ENCODE measurements at regions of chr19 and their contacts with region 1.

Region 1: DNA sequence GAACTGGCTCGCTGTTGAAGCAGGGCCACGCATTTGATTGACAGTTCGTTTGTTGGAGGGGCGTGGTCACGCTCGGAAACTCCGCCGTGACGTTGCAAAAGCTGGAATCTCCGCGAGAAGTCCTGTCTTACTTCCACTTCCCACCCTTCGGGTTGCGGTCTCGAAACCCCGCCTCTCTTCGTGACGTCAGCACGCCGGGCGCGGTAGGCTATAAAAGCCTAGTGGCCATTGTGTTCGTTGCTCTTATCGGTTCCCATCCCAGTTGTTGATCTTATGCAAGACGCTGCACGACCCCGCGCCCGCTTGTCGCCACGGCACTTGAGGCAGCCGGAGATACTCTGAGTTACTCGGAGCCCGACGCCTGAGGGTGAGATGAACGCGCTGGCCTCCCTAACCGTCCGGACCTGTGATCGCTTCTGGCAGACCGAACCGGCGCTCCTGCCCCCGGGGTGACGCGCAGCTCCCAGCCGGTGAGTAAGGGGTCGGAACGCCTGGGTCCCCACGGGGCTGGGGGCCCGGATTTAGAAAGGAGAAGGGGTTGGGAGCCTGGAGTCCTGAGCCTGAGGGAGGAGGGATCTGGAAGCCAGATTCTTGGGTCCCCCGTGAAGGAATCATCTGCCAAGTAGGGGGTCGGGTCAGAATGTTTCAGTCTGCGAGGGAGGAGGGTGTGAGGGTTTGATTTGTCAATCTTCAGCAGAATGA is at the start of gene PPP1R15A:
- DNase-seq: peak; percentile 99
- ATAC-seq: peak; percentile 50
- H3K4me3 Mint-ChIP-seq: peak within 1 kb of the TSS; percentile 98
- H3K27ac Mint-ChIP-seq: peak within 1 kb of the TSS; percentile 99
- H3K4me1 Mint-ChIP-seq: peaks cover 41% of the 10 kb centered on the region
- H3K27me3 Mint-ChIP-seq: no peaks in the 10 kb centered on the region
- total RNA-seq, gene PPP1R15A: 51.6 to 62.4 TPM

Region 2: DNA sequence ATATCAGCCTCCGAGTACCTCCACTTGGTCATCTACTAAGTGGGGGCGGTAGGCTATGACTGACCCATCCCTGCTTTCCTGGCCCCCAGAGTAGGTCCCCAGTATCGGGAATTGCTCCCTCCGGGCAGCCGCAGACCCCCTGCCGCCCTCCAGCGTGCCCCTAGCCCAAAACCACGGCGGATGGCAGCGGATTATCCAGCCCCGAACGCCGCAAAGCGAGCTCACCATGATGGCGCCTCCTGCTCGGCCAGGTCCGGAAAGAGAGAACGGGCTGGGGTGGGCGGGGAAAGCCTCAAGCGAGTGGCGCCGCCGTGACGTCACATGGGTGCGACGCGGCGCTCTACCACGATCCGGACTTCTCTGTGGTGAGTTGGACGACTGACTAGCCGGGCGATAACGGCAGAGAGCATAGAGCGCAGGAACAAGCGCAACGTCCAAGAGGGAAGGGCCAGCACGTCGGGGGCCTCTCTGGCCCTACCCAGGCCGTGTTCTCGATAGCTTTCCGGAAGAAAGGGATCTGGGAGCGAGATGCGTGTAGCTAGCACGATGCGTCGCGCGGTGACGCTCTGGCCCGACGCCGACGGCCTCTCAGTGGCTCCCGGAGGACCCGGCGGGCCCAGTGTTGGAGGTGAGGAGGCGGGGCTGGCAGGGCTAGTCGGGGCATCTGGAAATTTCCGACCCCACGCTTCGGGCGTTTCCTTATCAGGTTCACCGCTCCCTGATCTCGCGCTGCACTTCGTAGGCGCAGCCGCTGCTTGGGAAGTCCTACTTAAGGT is 253.2 kb before region 1 on chr19 and contains the starts of genes RPL18 and SPHK2:
- CTCF ChIA-PET with region 1: no interaction called
- POLR2A ChIA-PET with region 1: no interaction called
- intact Hi-C with region 1: loop called in 1 of 2 experiments (anchors 1 kb)
- DNase-seq: peak; percentile 97
- ATAC-seq: peak; percentile 82
- H3K4me3 Mint-ChIP-seq: peak within 1 kb of the TSS; percentile 94
- H3K27ac Mint-ChIP-seq: peak within 1 kb of the TSS; percentile 97
- H3K4me1 Mint-ChIP-seq: peaks cover 48% of the 10 kb centered on the region
- H3K27me3 Mint-ChIP-seq: no peaks in the 10 kb centered on the region
- total RNA-seq, gene RPL18: 2,026 to 2,191 TPM
- total RNA-seq, gene SPHK2: 27.0 TPM

Region 3: GRCh38 chr19:48812094-48812929 is 60.0 kb before region 1 on chr19:
- CTCF ChIA-PET with region 1: no interaction called
- POLR2A ChIA-PET with region 1: interaction called, 5 read pairs
- intact Hi-C with region 1: loop called in 1 of 2 experiments (anchors 2 kb)
- DNase-seq: peak; percentile 78
- ATAC-seq: peak; percentile 40
- H3K4me3 Mint-ChIP-seq: peak overlapping the region; percentile 85
- H3K27ac Mint-ChIP-seq: peak overlapping the region; percentile 37
- H3K4me1 Mint-ChIP-seq: peaks cover 29% of the 10 kb centered on the region
- H3K27me3 Mint-ChIP-seq: no peaks in the 10 kb centered on the region

Region 4: GRCh38 chr19:48899781-48900476 is 27.6 kb after region 1 on chr19 and contains the start of gene NUCB1:
- CTCF ChIA-PET with region 1: interaction called, 8 read pairs
- POLR2A ChIA-PET with region 1: interaction called, 6 read pairs
- intact Hi-C with region 1: loop called (anchors 1 kb)
- DNase-seq: peak; percentile 100
- ATAC-seq: peak; percentile 95
- H3K4me3 Mint-ChIP-seq: peak within 1 kb of the TSS; percentile 99
- H3K27ac Mint-ChIP-seq: peak within 1 kb of the TSS; percentile 98
- H3K4me1 Mint-ChIP-seq: peaks cover 34% of the 10 kb centered on the region
- H3K27me3 Mint-ChIP-seq: peaks cover 5% of the 10 kb centered on the region
- total RNA-seq, gene NUCB1: 115 to 118 TPM

Region 5: DNA sequence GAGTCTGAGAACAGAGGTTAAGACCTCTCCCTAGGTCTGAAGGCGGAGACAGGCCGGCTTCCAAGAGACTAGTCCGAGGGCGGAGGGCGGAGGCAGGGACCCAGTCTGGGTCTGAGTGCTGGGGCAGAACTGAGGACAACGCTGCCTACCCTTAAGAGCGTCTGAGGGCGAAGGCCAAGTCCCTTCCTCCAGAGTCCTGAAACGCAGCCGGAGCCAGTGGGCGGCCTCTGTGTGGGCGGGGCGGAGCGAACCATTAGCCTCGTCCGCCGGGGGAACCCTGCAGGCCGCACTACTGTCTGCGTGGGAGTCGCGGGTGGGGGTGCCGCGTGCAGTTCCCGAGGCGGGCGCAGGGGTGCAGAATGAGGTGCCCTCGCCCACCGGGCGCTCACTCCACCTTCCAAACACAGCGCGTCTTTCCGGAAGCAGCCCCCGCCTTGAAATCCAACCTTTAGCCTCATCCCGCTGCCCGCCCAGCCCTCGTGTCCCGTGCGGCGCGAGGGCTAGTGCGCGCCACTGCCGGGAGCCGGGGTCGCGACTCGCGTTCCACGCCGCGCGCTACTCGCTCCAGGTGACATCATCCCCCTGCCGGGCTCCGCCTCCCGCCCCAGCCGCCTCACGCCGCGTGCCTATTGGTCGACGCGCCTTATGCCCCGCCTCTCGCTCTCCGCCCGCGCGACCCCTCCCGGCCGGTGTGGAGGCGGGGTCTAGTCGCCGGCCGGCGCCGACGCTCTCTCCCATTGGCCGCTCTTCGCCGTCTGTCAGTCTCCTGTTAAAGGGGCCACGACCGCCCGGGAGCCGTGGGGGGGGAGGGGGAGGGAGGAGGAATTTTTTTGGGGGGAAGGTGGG is 246.5 kb after region 1 on chr19 and contains the start of gene C19orf73:
- CTCF ChIA-PET with region 1: no interaction called
- POLR2A ChIA-PET with region 1: no interaction called
- intact Hi-C with region 1: loop called in 1 of 2 experiments (anchors 1 kb)
- DNase-seq: peak; percentile 98
- ATAC-seq: peak; percentile 85
- H3K4me3 Mint-ChIP-seq: peak within 1 kb of the TSS; percentile 80
- H3K27ac Mint-ChIP-seq: peak within 1 kb of the TSS; percentile 84
- H3K4me1 Mint-ChIP-seq: peaks cover 28% of the 10 kb centered on the region
- H3K27me3 Mint-ChIP-seq: peaks cover 8% of the 10 kb centered on the region
- total RNA-seq, gene C19orf73: 1.7 to 2.0 TPM

Region 6: GRCh38 chr19:49570138-49570856 is 698.0 kb after region 1 on chr19:
- CTCF ChIA-PET with region 1: no interaction called
- POLR2A ChIA-PET with region 1: no interaction called
- intact Hi-C with region 1: loop called in 1 of 2 experiments (anchors 10 kb)
- DNase-seq: peak; percentile 82
- ATAC-seq: peak; percentile 54
- H3K4me3 Mint-ChIP-seq: peak overlapping the region; percentile 16
- H3K27ac Mint-ChIP-seq: peak overlapping the region; percentile 76
- H3K4me1 Mint-ChIP-seq: peaks cover 56% of the 10 kb centered on the region
- H3K27me3 Mint-ChIP-seq: no peaks in the 10 kb centered on the region